PC-3 (cell line): ENCODE measurements at regions of chr1 and their contacts with region 1.

Region 1: GRCh38 chr1:6393400-6394187 is at the start of gene ACOT7:
- DNase-seq: peak; percentile 97
- ATAC-seq: peak; percentile 87
- H3K4me3 ChIP-seq: peak within 1 kb of the TSS; percentile 78
- H3K27ac ChIP-seq: peak within 1 kb of the TSS; percentile 90
- H3K4me1 ChIP-seq: peaks cover 17% of the 10 kb centered on the region
- H3K27me3 ChIP-seq: no peaks in the 10 kb centered on the region
- CTCF ChIP-seq: peak; percentile 22; the same call in 1 of the 2 replicates
- total RNA-seq, gene ACOT7: 164 and 165 TPM in 2 replicates

Region 2: GRCh38 chr1:6423321-6423999 is 29.9 kb after region 1 on chr1:
- CTCF ChIA-PET with region 1: interaction called, 3 read pairs
- POLR2A ChIA-PET with region 1: interaction called, 16 read pairs
- intact Hi-C with region 1: no loop called
- DNase-seq: peak; percentile 98
- ATAC-seq: peak; percentile 46
- H3K4me3 ChIP-seq: peak overlapping the region; percentile 73
- H3K27ac ChIP-seq: peak overlapping the region; percentile 73
- H3K4me1 ChIP-seq: peaks cover 63% of the 10 kb centered on the region
- H3K27me3 ChIP-seq: no peaks in the 10 kb centered on the region
- CTCF ChIP-seq: peak; percentile 98